Thyroid gland (tissue), 4 donors: ENCODE measurements at regions of chr7 and their contacts with region 1.

Region 1: GRCh38 chr7:135553346-135553745 is 4.4 kb upstream of the NUP205 start:
- DNase-seq: no peak
- H3K4me3 ChIP-seq: no peak overlapping the region
- H3K27ac ChIP-seq: no peak overlapping the region
- H3K4me1 ChIP-seq: peaks cover 0 to 5% of the 10 kb centered on the region in 2 donors
- H3K27me3 ChIP-seq: no peaks in the 10 kb centered on the region
- CTCF ChIP-seq: no peak
- POLR2A ChIP-seq: no peak

Region 2: DNA sequence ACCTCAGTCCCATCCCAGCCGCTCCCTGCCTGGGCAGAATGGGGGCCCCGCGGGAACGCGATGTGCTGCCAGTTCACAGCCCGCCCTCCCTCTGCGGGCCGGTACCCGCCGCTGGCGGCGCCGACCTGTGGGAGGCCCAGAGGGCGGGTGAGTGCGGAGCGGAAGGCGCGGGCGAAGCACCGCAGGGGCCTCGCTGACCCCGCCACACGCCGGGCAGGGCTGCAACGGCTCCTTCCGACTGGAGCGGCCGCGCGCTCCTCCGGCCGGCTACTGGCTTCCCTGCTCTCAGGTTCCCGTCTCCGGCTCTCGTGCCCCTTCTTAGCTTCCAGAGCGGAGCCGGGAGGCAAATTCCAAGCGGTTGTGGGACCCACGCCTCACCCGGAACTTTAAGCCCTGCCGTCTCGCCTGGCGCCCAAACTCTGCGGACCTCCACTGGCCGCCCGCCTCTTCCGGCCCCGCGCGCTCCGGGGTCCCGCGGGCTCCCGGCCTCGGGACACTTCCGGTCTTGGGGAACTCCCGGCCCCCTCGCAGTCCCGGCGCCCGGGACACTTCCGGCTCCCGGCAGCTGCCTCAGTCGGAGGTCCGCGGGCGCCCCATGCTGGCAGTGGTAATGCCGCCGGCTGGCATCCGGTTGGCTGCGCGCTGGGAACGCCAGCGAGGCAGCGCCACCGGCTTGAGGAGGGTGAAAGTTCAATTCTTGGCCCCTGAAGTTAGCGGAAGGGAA is 382.9 kb before region 1 on chr7 and contains the start of gene CYREN:
- intact Hi-C with region 1: no loop called
- DNase-seq: peak; percentile 94 to 95
- H3K4me3 ChIP-seq: peak within 1 kb of the TSS; percentile 76 to 87 (median 76)
- H3K27ac ChIP-seq: peak within 1 kb of the TSS; percentile 58 to 95 (median 92)
- H3K4me1 ChIP-seq: peaks cover 20 to 44% of the 10 kb centered on the region in 2 donors
- H3K27me3 ChIP-seq: no peaks in the 10 kb centered on the region
- CTCF ChIP-seq: peak in 5 of 6 experiments; percentile 32 to 76 (median 61)
- POLR2A ChIP-seq: peak in 1 of 2 donors; percentile 78
- total RNA-seq, gene CYREN: 40.3 to 54.4 (median 46.8) TPM

Region 3: GRCh38 chr7:135274495-135275268 is 278.7 kb before region 1 on chr7:
- intact Hi-C with region 1: no loop called
- DNase-seq: peak; percentile 54 to 59
- H3K4me3 ChIP-seq: no peak overlapping the region
- H3K27ac ChIP-seq: no peak overlapping the region
- H3K4me1 ChIP-seq: no peaks in the 10 kb centered on the region
- H3K27me3 ChIP-seq: no peaks in the 10 kb centered on the region
- CTCF ChIP-seq: peak; percentile 55 to 88 (median 70)
- POLR2A ChIP-seq: no peak

Region 4: DNA sequence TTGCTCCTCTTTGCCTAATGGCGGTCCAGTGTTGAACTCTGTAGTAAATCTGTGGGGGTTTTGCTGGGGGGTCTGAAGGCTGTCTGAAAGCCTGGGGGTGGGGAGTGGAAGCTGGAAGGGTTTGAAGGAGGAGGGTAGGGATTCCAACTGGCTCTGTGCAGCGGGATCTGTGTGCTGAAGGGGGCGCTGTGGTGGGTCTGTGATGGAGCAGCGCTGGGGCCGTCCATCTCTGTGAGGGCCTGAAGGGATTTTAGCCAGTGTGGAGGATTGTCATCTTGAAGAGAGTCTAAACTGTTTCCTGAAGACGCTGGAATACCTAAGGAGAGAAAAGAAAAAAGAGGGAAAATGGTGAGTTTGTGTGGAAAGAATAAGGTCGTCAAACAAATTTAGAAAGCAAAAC is 190.5 kb before region 1 on chr7:
- intact Hi-C with region 1: no loop called
- DNase-seq: no peak
- H3K4me3 ChIP-seq: no peak overlapping the region
- H3K27ac ChIP-seq: no peak overlapping the region
- H3K4me1 ChIP-seq: no peaks in the 10 kb centered on the region
- H3K27me3 ChIP-seq: no peaks in the 10 kb centered on the region
- CTCF ChIP-seq: no peak
- POLR2A ChIP-seq: no peak

Region 5: DNA sequence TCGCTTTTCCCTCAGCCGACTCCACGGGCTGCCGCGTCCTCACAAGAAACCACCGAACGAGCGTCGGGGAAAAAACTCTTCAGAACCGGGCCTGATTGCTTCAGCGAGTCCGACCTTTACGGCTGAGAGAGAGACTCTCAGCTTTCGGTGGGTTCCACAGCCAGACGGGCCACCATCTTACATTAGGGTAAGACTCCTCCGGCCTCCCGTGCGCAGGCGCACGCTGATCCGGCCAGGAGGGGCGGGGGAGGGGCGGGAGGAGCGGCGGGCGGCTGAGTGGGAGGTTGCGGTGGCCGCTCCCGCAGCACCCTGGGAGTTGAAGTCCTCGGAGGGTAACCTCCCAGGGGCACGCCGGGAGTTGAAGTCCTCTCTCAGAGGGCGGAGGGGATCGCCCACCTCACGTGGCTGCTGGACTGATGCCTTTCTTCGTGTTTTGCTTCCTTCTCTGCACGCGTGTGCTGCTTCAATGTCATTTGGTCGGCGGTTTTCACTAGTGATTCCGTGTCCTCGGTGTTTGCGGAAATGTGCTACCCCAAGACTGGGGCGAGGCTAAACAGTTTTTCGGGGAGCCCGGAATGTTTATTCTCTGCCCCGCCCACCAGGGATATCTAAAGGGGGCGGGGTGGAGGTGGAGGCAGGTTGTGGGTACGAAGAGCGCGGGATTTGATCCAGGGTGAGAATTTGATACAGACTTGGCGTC is 43.3 kb before region 1 on chr7 and contains the start of gene CNOT4:
- intact Hi-C with region 1: loop called (anchors 5 kb)
- DNase-seq: peak; percentile 96 to 97
- H3K4me3 ChIP-seq: peak within 1 kb of the TSS; percentile 80 to 93 (median 83)
- H3K27ac ChIP-seq: peak within 1 kb of the TSS; percentile 91 to 93 (median 92)
- H3K4me1 ChIP-seq: peaks cover 20 to 22% of the 10 kb centered on the region in 2 donors
- H3K27me3 ChIP-seq: no peaks in the 10 kb centered on the region
- CTCF ChIP-seq: no peak
- POLR2A ChIP-seq: peak in 1 of 2 donors; percentile 83
- total RNA-seq, gene CNOT4: 25.6 to 36.8 (median 29.3) TPM